ENCODE measurements at regions of chr17 and their contacts with region 1.

Region 1: GRCh38 chr17:1399679-1400512 is at the start of gene YWHAE:
- DNase-seq: peak; percentile 89 to 97 (median 94)
- ATAC-seq: peak; percentile 93
- H3K4me3 ChIP-seq: peak within 1 kb of the TSS; percentile 100
- H3K4me3 Mint-ChIP-seq: peak within 1 kb of the TSS; percentile 97 to 100 (median 99)
- H3K27ac ChIP-seq: peak within 1 kb of the TSS; percentile 98
- H3K27ac Mint-ChIP-seq: peak within 1 kb of the TSS; percentile 97 to 100 (median 99)
- H3K4me1 ChIP-seq: peaks cover 23 to 24% of the 10 kb centered on the region in 2 donors
- H3K4me1 Mint-ChIP-seq: peaks cover 18 to 45% (median 38%) of the 10 kb centered on the region in 7 donors
- H3K27me3 ChIP-seq: no peaks in the 10 kb centered on the region
- H3K27me3 Mint-ChIP-seq: peaks cover 0 to 6% (median 0%) of the 10 kb centered on the region in 5 donors
- total RNA-seq, gene YWHAE: 119 to 317 (median 127) TPM

Region 2: DNA sequence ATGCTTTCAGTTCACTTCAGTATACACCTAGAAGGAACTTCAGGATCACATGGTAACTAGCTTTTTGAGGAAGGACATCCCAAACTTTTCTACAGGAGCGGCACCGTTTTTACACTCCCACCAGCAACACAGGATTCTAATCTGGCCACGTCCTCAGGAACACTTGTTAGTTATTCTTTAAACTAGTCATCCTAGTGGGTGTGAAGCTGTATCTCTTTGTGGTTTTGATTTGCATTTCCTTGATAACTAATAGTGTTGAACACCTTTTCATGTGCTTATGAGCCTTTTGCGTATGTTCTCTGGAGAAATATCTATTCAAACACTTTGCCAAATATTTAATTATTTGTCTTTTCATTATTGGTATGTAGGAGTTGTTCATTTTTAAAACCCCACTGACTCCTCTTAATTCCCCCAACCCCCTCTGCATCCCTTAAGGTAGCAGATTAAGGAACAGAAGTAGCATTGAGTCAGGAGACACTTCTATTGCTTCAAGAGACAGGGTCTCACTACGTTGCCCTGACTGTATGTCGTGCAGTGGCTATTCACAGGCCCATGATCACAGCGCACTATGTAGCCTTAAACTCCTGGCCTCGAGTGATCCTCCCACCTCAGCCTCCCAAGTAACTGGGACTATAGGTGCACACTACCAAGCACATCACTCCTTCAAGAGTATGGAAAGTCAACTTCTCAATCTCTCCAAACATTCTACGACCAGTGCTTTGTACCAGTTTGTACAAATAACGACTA is 25.3 kb before region 1 on chr17:
- CTCF ChIA-PET with region 1: no interaction called
- POLR2A ChIA-PET with region 1: interaction called, 10 read pairs
- intact Hi-C with region 1: loop called (anchors 1 to 2 kb)
- DNase-seq: no peak
- ATAC-seq: peak; percentile 66
- H3K4me3 ChIP-seq: peak overlapping the region; percentile 5
- H3K4me3 Mint-ChIP-seq: peak overlapping the region; percentile 1 to 81 (median 58)
- H3K27ac ChIP-seq: peak overlapping the region; percentile 44
- H3K27ac Mint-ChIP-seq: peak overlapping the region; percentile 46 to 88 (median 86)
- H3K4me1 ChIP-seq: peaks cover 55 to 62% of the 10 kb centered on the region in 2 donors
- H3K4me1 Mint-ChIP-seq: peaks cover 52 to 96% (median 75%) of the 10 kb centered on the region in 7 donors
- H3K27me3 ChIP-seq: no peaks in the 10 kb centered on the region
- H3K27me3 Mint-ChIP-seq: no peaks in the 10 kb centered on the region

Region 3: GRCh38 chr17:1379930-1380313 is 20.0 kb before region 1 on chr17:
- CTCF ChIA-PET with region 1: no interaction called
- POLR2A ChIA-PET with region 1: interaction called, 10 read pairs
- intact Hi-C with region 1: loop called (anchors 1 to 2 kb)
- DNase-seq: peak in 1 of 9 donors; percentile 35
- ATAC-seq: peak; percentile 71
- H3K4me3 ChIP-seq: no peak overlapping the region
- H3K4me3 Mint-ChIP-seq: peak overlapping the region in 9 of 10 donors; percentile 16 to 81 (median 55)
- H3K27ac ChIP-seq: no peak overlapping the region
- H3K27ac Mint-ChIP-seq: peak overlapping the region; percentile 53 to 89 (median 83)
- H3K4me1 ChIP-seq: peaks cover 65 to 67% of the 10 kb centered on the region in 2 donors
- H3K4me1 Mint-ChIP-seq: peaks cover 64 to 85% (median 68%) of the 10 kb centered on the region in 7 donors
- H3K27me3 ChIP-seq: no peaks in the 10 kb centered on the region
- H3K27me3 Mint-ChIP-seq: no peaks in the 10 kb centered on the region

Region 4: GRCh38 chr17:1455797-1456599 is 56.1 kb after region 1 on chr17 and contains the start of gene CRK:
- CTCF ChIA-PET with region 1: no interaction called
- POLR2A ChIA-PET with region 1: interaction called, 7 read pairs
- intact Hi-C with region 1: loop called (anchors 1 kb)
- DNase-seq: peak; percentile 97 to 100 (median 99)
- ATAC-seq: peak; percentile 97
- H3K4me3 ChIP-seq: peak within 1 kb of the TSS; percentile 94
- H3K4me3 Mint-ChIP-seq: peak within 1 kb of the TSS; percentile 86 to 95 (median 90)
- H3K27ac ChIP-seq: peak within 1 kb of the TSS; percentile 97
- H3K27ac Mint-ChIP-seq: peak within 1 kb of the TSS; percentile 63 to 92 (median 86)
- H3K4me1 ChIP-seq: peaks cover 18 to 37% of the 10 kb centered on the region in 2 donors
- H3K4me1 Mint-ChIP-seq: peaks cover 28 to 64% (median 48%) of the 10 kb centered on the region in 7 donors
- H3K27me3 ChIP-seq: no peaks in the 10 kb centered on the region
- H3K27me3 Mint-ChIP-seq: peaks cover 0 to 23% (median 4%) of the 10 kb centered on the region in 5 donors
- total RNA-seq, gene CRK: 16.9 to 29.0 (median 20.9) TPM

Region 5: DNA sequence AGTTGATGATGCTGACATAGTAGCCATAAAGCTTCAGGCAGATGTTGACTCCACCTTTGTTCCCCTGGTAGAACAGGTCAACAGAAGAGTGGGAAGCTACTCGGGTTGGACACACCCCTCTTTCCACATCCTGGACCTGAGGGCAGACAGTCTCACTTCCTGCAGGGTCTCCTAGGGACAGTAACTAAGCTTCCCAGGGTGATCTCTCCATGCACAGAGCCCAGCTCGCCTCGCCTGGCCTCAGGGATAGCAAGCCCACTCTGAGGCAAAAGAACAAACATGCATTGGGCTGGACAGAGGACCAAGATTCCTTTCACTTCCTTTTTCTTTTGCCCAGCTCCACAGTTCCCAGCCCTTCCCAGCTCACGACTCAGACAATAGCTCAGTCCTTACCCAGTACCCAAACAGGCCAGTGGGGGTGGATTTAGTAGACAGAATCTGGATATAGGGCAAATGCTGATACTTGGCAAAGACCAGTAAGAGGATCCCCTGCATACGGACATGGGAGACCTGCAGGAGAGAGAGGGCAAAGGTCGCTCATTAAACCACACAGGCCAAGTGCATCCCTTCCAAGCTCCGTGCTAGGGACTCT is 109.5 kb after region 1 on chr17:
- CTCF ChIA-PET with region 1: no interaction called
- POLR2A ChIA-PET with region 1: no interaction called
- intact Hi-C with region 1: no loop called
- DNase-seq: no peak
- ATAC-seq: peak; percentile 20
- H3K4me3 ChIP-seq: no peak overlapping the region
- H3K4me3 Mint-ChIP-seq: no peak overlapping the region
- H3K27ac ChIP-seq: no peak overlapping the region
- H3K27ac Mint-ChIP-seq: peak overlapping the region in 1 of 9 donors; percentile 72
- H3K4me1 ChIP-seq: no peaks in the 10 kb centered on the region
- H3K4me1 Mint-ChIP-seq: peaks cover 8 to 25% (median 16%) of the 10 kb centered on the region in 7 donors
- H3K27me3 ChIP-seq: no peaks in the 10 kb centered on the region
- H3K27me3 Mint-ChIP-seq: no peaks in the 10 kb centered on the region

Region 6: GRCh38 chr17:1561400-1562175 is 161.7 kb after region 1 on chr17:
- CTCF ChIA-PET with region 1: no interaction called
- POLR2A ChIA-PET with region 1: no interaction called
- intact Hi-C with region 1: loop called in 1 of 2 experiments (anchors 1 kb)
- DNase-seq: peak in 8 of 9 donors; percentile 28 to 58 (median 36)
- ATAC-seq: peak; percentile 37
- H3K4me3 ChIP-seq: peak overlapping the region; percentile 39
- H3K4me3 Mint-ChIP-seq: peak overlapping the region; percentile 73 to 89 (median 82)
- H3K27ac ChIP-seq: peak overlapping the region; percentile 76
- H3K27ac Mint-ChIP-seq: peak overlapping the region in 8 of 9 donors; percentile 54 to 90 (median 76)
- H3K4me1 ChIP-seq: peaks cover 9 to 12% of the 10 kb centered on the region in 2 donors
- H3K4me1 Mint-ChIP-seq: peaks cover 25 to 54% (median 43%) of the 10 kb centered on the region in 7 donors
- H3K27me3 ChIP-seq: no peaks in the 10 kb centered on the region
- H3K27me3 Mint-ChIP-seq: peaks cover 0 to 13% (median 0%) of the 10 kb centered on the region in 5 donors